ENCODE measurements at regions of chr1 and their contacts with region 1.

Region 1: DNA sequence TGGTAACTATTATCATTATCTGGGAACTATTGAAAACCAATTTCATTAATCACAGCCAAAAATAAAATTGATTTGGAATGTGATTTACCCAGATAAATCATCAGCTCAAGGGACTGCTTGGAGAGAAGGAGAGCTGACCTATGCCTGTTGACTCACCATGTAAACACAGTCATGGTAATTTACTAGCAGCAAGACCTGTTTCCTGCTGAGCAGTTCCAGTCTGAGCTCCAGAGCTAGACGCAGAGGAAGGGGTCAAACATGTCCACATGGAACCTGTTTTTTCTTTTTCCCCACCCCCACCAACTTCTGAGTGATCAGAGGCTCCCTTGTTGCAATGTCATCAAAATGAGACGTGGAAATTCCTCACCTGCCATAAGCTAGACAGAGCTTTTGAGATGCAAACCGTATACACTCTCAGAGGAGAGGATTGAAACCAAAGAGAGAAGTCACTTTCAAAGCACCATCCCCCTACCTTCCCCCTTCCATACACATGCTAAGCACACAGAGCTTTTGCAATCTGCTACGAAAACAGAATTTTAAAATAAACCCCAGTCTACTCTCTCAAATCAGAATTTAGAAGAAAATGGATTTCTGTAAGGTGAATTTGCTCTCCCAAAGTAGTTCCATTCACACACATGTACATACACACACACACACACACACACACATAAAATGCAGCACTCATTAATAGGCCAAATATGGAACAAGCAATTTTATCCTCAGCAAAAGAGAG is 55.9 kb upstream of the PTGFRN start:
- DNase-seq: no peak
- H3K4me3 ChIP-seq: no peak overlapping the region
- CTCF ChIP-seq: no peak
- POLR2A ChIP-seq: no peak

Region 2: GRCh38 chr1:117036018-117036461 is 182.2 kb after region 1 on chr1:
- intact Hi-C with region 1: no loop called
- DNase-seq: no peak
- H3K4me3 ChIP-seq: no peak overlapping the region
- CTCF ChIP-seq: no peak
- POLR2A ChIP-seq: no peak

Region 3: DNA sequence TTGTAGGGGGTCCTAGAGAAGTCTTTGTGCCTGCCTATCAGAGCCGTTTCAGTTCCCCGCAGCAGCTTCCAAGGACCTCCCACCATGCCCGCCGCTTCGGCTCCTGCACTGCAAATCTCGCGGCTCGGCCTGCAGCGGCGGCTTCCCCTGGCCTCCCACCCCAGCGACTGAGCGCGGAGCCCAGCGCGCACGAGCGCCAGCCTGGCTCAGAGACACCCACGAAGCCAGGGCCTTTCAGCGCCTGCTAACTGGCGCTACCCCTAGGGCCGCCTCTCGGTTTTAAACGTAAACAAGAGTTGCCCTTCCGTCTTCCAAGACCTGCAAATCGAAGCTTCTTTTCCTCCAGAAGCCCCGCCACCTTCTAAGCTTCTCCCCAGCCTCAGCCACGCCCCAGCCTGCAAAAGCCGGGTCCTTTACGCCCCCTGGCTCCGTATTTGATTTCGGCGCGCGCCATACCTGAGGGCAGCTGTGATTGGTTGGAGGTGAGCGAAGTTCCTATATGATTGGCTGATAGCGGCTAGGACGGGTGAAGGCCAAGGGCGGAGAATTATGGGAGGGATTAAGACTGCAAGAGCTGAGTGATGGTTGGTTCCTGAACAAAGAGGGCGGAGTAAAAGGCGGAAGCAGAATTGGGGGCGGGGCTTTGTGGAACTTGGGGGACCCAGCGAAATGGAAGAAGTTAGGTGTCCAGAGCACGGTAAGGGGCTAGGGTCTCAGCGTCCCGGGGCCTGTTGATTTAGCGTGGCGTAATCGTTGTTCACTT is 206.0 kb after region 1 on chr1 and contains the start of gene TTF2:
- intact Hi-C with region 1: loop called (anchors 10 kb)
- DNase-seq: peak; percentile 98
- H3K4me3 ChIP-seq: peak within 1 kb of the TSS; percentile 81
- CTCF ChIP-seq: no peak
- POLR2A ChIP-seq: no peak
- total RNA-seq, gene TTF2: 6.8 to 26.8 (median 20.6) TPM